ENCODE measurements at regions of chr2 and their contacts with region 1.

Region 1: GRCh38 chr2:460861-461260 is 173.0 kb upstream of the ALKAL2 start:
- DNase-seq: peak; percentile 29 to 89 (median 64)
- ATAC-seq: peak; percentile 78
- H3K4me3 ChIP-seq: peak overlapping the region in 1 of 2 experiments; percentile 19
- H3K4me3 Mint-ChIP-seq: peak overlapping the region; percentile 75
- H3K27ac ChIP-seq: no peak overlapping the region
- H3K27ac Mint-ChIP-seq: peak overlapping the region; percentile 28
- H3K4me1 ChIP-seq: peaks cover 22% of the 10 kb centered on the region
- H3K4me1 Mint-ChIP-seq: peaks cover 49% of the 10 kb centered on the region
- H3K27me3 ChIP-seq: peaks cover 3 to 4% of the 10 kb centered on the region in 2 experiments
- H3K27me3 Mint-ChIP-seq: peaks cover 31% of the 10 kb centered on the region
- CTCF ChIP-seq: no peak

Region 2: GRCh38 chr2:393711-394696 is 66.9 kb before region 1 on chr2:
- CTCF ChIA-PET with region 1: no interaction called
- POLR2A ChIA-PET with region 1: no interaction called
- intact Hi-C with region 1: loop called in 1 of 2 experiments (anchors 2 kb)
- DNase-seq: peak; percentile 31 to 85 (median 71)
- ATAC-seq: peak; percentile 82
- H3K4me3 ChIP-seq: peak overlapping the region; percentile 33 to 36
- H3K4me3 Mint-ChIP-seq: peak overlapping the region; percentile 88
- H3K27ac ChIP-seq: peak overlapping the region; percentile 28 to 69
- H3K27ac Mint-ChIP-seq: peak overlapping the region; percentile 96
- H3K4me1 ChIP-seq: peaks cover 24% of the 10 kb centered on the region
- H3K4me1 Mint-ChIP-seq: peaks cover 23% of the 10 kb centered on the region
- H3K27me3 ChIP-seq: no peaks in the 10 kb centered on the region
- H3K27me3 Mint-ChIP-seq: no peaks in the 10 kb centered on the region
- CTCF ChIP-seq: no peak

Region 3: GRCh38 chr2:444937-445884 is 15.7 kb before region 1 on chr2:
- CTCF ChIA-PET with region 1: no interaction called
- POLR2A ChIA-PET with region 1: no interaction called
- intact Hi-C with region 1: no loop called
- DNase-seq: peak in 4 of 9 experiments; percentile 53 to 79 (median 66)
- ATAC-seq: peak; percentile 92
- H3K4me3 ChIP-seq: no peak overlapping the region
- H3K4me3 Mint-ChIP-seq: peak overlapping the region; percentile 58
- H3K27ac ChIP-seq: no peak overlapping the region
- H3K27ac Mint-ChIP-seq: peak overlapping the region; percentile 89
- H3K4me1 ChIP-seq: peaks cover 9% of the 10 kb centered on the region
- H3K4me1 Mint-ChIP-seq: peaks cover 16% of the 10 kb centered on the region
- H3K27me3 ChIP-seq: no peaks in the 10 kb centered on the region
- H3K27me3 Mint-ChIP-seq: no peaks in the 10 kb centered on the region
- CTCF ChIP-seq: no peak

Region 4: GRCh38 chr2:758073-758820 is 297.4 kb after region 1 on chr2:
- CTCF ChIA-PET with region 1: no interaction called
- POLR2A ChIA-PET with region 1: no interaction called
- intact Hi-C with region 1: no loop called
- DNase-seq: no peak
- ATAC-seq: no peak
- H3K4me3 ChIP-seq: no peak overlapping the region
- H3K4me3 Mint-ChIP-seq: no peak overlapping the region
- H3K27ac ChIP-seq: no peak overlapping the region
- H3K27ac Mint-ChIP-seq: no peak overlapping the region
- H3K4me1 ChIP-seq: no peaks in the 10 kb centered on the region
- H3K4me1 Mint-ChIP-seq: peaks cover 6% of the 10 kb centered on the region
- H3K27me3 ChIP-seq: no peaks in the 10 kb centered on the region
- H3K27me3 Mint-ChIP-seq: peaks cover 11% of the 10 kb centered on the region
- CTCF ChIP-seq: no peak